B cell (primary cell): ENCODE measurements at regions of chr12 and their contacts with region 1.

Region 1: GRCh38 chr12:47307680-47308399 is 228.1 kb upstream of the AMIGO2 start:
- DNase-seq: peak; percentile 84
- ATAC-seq: peak; percentile 84
- H3K4me3 ChIP-seq: peak overlapping the region; percentile 64 to 90 (median 73)
- H3K4me3 Mint-ChIP-seq: peak overlapping the region; percentile 94
- H3K27ac ChIP-seq: peak overlapping the region; percentile 73 to 74
- H3K27ac Mint-ChIP-seq: peak overlapping the region; percentile 90
- H3K4me1 ChIP-seq: peaks cover 10 to 29% of the 10 kb centered on the region in 2 donors
- H3K4me1 Mint-ChIP-seq: peaks cover 53% of the 10 kb centered on the region
- H3K27me3 ChIP-seq: no peaks in the 10 kb centered on the region
- H3K27me3 Mint-ChIP-seq: no peaks in the 10 kb centered on the region
- CTCF ChIP-seq: peak; percentile 76

Region 2: GRCh38 chr12:47071241-47071852 is 236.5 kb before region 1 on chr12:
- CTCF ChIA-PET with region 1: interaction called, 20 read pairs
- POLR2A ChIA-PET with region 1: no interaction called
- intact Hi-C with region 1: no loop called
- DNase-seq: peak; percentile 43
- ATAC-seq: no peak
- H3K4me3 ChIP-seq: no peak overlapping the region
- H3K4me3 Mint-ChIP-seq: no peak overlapping the region
- H3K27ac ChIP-seq: no peak overlapping the region
- H3K27ac Mint-ChIP-seq: no peak overlapping the region
- H3K4me1 ChIP-seq: no peaks in the 10 kb centered on the region
- H3K4me1 Mint-ChIP-seq: no peaks in the 10 kb centered on the region
- H3K27me3 ChIP-seq: no peaks in the 10 kb centered on the region
- H3K27me3 Mint-ChIP-seq: no peaks in the 10 kb centered on the region
- CTCF ChIP-seq: peak; percentile 63

Region 3: GRCh38 chr12:47190271-47190750 is 117.5 kb before region 1 on chr12:
- CTCF ChIA-PET with region 1: interaction called, 5 read pairs
- POLR2A ChIA-PET with region 1: no interaction called
- intact Hi-C with region 1: loop called (anchors 5 kb)
- DNase-seq: no peak
- ATAC-seq: no peak
- H3K4me3 ChIP-seq: no peak overlapping the region
- H3K4me3 Mint-ChIP-seq: peak overlapping the region; percentile 30
- H3K27ac ChIP-seq: no peak overlapping the region
- H3K27ac Mint-ChIP-seq: peak overlapping the region; percentile 23
- H3K4me1 ChIP-seq: peaks cover 62 to 67% of the 10 kb centered on the region in 2 donors
- H3K4me1 Mint-ChIP-seq: peaks cover 64% of the 10 kb centered on the region
- H3K27me3 ChIP-seq: no peaks in the 10 kb centered on the region
- H3K27me3 Mint-ChIP-seq: no peaks in the 10 kb centered on the region
- CTCF ChIP-seq: no peak

Region 4: DNA sequence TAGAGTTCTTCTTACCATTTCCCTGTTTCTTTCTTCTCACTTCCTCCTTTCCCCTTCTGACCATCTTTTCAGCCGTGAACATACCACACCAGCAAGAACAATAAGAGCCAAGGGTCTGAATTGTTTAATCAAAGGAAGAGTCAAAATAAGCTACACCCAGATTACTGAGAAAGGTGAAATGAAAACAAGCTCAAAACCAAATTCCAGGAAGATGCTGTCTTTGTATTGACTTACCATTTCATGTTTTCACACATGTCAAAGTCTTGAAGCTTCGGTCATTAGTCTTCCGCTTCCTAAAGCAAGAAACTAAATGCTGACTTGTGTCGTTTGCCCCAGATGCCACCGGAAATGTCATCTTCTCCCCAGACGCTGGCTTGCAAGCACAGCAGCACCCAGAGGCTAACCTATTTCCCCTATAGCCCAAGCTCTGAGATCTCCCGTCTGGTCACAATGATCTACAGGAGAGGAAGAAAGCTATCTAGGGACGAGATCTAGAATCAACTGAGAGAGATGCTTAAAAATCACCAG is 91.6 kb before region 1 on chr12:
- CTCF ChIA-PET with region 1: interaction called, 7 read pairs
- POLR2A ChIA-PET with region 1: interaction called, 3 read pairs
- intact Hi-C with region 1: loop called (anchors 1 kb)
- DNase-seq: peak; percentile 88
- ATAC-seq: peak; percentile 85
- H3K4me3 ChIP-seq: peak overlapping the region; percentile 56 to 80 (median 60)
- H3K4me3 Mint-ChIP-seq: peak overlapping the region; percentile 90
- H3K27ac ChIP-seq: peak overlapping the region; percentile 78 to 89
- H3K27ac Mint-ChIP-seq: peak overlapping the region; percentile 92
- H3K4me1 ChIP-seq: peaks cover 63 to 73% of the 10 kb centered on the region in 2 donors
- H3K4me1 Mint-ChIP-seq: peaks cover 56% of the 10 kb centered on the region
- H3K27me3 ChIP-seq: no peaks in the 10 kb centered on the region
- H3K27me3 Mint-ChIP-seq: no peaks in the 10 kb centered on the region
- CTCF ChIP-seq: no peak

Region 5: DNA sequence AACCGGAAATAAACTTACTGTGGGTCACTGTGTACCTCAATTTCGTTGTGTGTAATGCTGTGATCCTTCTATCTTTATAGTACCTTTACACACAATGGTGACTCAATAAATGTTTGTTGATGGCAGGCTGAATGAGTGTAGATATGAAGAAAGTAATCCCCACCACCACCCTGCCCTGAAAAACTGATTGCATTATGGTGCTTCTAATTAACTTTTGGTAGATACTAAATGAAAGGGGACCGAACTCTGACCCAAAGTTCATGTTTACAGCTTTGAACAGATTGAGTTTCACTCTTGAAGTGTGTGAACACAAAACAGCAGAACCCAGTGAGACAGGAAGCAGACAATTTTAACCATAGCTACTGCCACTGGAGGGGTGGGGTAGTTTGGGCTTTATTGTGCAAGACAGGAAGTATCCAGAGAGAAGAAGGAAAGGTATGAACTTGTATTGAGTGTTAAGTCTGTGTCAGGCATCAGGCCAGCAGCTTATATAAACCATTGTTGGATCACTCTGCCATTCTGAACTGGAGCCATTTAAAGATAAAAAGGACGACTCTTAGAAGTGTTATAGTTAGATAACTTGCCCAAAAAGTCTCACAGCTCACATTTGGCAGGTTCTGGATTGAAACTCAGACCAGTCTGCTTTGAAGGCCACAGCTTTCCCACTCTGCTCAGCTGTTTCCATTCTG is 31.1 kb before region 1 on chr12:
- CTCF ChIA-PET with region 1: interaction called, 11 read pairs
- POLR2A ChIA-PET with region 1: no interaction called
- intact Hi-C with region 1: loop called (anchors 2 kb)
- DNase-seq: peak; percentile 64
- ATAC-seq: peak; percentile 90
- H3K4me3 ChIP-seq: peak overlapping the region in 2 of 5 experiments; percentile 20 to 31
- H3K4me3 Mint-ChIP-seq: peak overlapping the region; percentile 72
- H3K27ac ChIP-seq: peak overlapping the region; percentile 70 to 88
- H3K27ac Mint-ChIP-seq: peak overlapping the region; percentile 94
- H3K4me1 ChIP-seq: peaks cover 49 to 51% of the 10 kb centered on the region in 2 donors
- H3K4me1 Mint-ChIP-seq: peaks cover 65% of the 10 kb centered on the region
- H3K27me3 ChIP-seq: no peaks in the 10 kb centered on the region
- H3K27me3 Mint-ChIP-seq: no peaks in the 10 kb centered on the region
- CTCF ChIP-seq: no peak

Region 6: GRCh38 chr12:47408171-47408871 is 100.5 kb after region 1 on chr12:
- CTCF ChIA-PET with region 1: interaction called, 17 read pairs
- POLR2A ChIA-PET with region 1: no interaction called
- intact Hi-C with region 1: loop called (anchors 1 kb)
- DNase-seq: peak; percentile 87
- ATAC-seq: peak; percentile 98
- H3K4me3 ChIP-seq: no peak overlapping the region
- H3K4me3 Mint-ChIP-seq: no peak overlapping the region
- H3K27ac ChIP-seq: peak overlapping the region; percentile 41 to 55
- H3K27ac Mint-ChIP-seq: peak overlapping the region; percentile 73
- H3K4me1 ChIP-seq: peaks cover 18 to 19% of the 10 kb centered on the region in 2 donors
- H3K4me1 Mint-ChIP-seq: peaks cover 21% of the 10 kb centered on the region
- H3K27me3 ChIP-seq: no peaks in the 10 kb centered on the region
- H3K27me3 Mint-ChIP-seq: no peaks in the 10 kb centered on the region
- CTCF ChIP-seq: peak; percentile 83